Activated CD4-positive, alpha-beta memory T cell treated with anti-CD3 and anti-CD28 coated beads, Interleukin-2, amount 10 ng/mL, durations not matched to agents 7 days and 5 days (primary cell): ENCODE measurements at regions of chr12 and their contacts with region 1.

Region 1: DNA sequence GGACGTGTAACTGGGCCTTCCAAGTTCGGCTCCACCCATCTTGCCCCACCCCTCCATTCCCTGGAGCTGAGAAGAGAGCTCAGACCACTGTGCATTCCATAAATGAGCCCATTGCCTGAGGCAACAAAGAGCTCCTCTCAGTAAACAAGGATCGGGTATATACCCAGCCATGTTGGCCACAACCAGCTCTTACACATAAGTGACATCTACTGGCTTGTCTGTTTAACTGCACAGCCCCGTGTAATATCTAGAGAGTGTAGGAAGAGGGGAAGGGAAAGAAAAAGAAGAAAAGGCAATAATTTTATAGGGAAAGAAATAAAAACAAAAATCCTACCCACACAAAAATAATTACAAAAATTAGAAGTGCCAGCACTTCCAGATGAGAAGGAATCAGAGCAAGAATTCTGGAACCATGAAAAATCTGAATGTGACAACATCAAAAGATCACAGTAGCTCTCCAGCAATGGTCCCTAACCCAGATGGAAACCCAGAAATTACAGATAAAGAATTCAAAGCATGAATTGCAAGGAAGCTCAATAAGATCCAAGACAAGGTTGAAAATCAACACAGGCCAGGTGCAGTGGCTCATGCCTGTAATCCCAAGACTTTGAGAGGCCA is 308.1 kb downstream of the RPAP3 start:
- DNase-seq: peak; percentile 59
- H3K4me3 Mint-ChIP-seq: no peak overlapping the region
- H3K27ac Mint-ChIP-seq: peak overlapping the region; percentile 77
- H3K4me1 Mint-ChIP-seq: peaks cover 69% of the 10 kb centered on the region
- H3K27me3 Mint-ChIP-seq: no peaks in the 10 kb centered on the region

Region 2: DNA sequence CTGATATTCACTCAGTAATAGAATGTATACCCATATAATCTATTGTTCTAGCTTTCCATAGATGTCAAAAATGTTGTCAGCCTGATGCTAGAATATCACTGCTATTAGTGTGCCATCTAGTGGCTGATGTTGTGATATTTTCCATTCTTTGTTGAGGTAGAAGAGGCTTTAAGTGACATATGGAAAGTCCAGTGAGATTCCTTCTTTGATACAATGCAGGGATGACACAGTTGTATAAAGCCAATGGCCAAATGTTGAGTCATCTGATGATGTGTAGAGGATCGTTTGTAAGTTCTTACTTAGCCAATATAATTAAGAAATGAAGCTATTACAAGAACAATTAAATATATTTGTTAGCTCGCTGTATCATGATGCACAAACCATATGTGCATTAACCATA is 376.5 kb before region 1 on chr12:
- CTCF ChIA-PET with region 1: interaction called, 13 read pairs
- POLR2A ChIA-PET with region 1: no interaction called
- DNase-seq: no peak
- H3K4me3 Mint-ChIP-seq: no peak overlapping the region
- H3K27ac Mint-ChIP-seq: no peak overlapping the region
- H3K4me1 Mint-ChIP-seq: peaks cover 6% of the 10 kb centered on the region
- H3K27me3 Mint-ChIP-seq: peaks cover 18% of the 10 kb centered on the region

Region 3: GRCh38 chr12:47071241-47071852 is 326.4 kb before region 1 on chr12:
- CTCF ChIA-PET with region 1: interaction called, 26 read pairs
- POLR2A ChIA-PET with region 1: no interaction called
- DNase-seq: no peak
- H3K4me3 Mint-ChIP-seq: no peak overlapping the region
- H3K27ac Mint-ChIP-seq: no peak overlapping the region
- H3K4me1 Mint-ChIP-seq: peaks cover 3% of the 10 kb centered on the region
- H3K27me3 Mint-ChIP-seq: no peaks in the 10 kb centered on the region

Region 4: DNA sequence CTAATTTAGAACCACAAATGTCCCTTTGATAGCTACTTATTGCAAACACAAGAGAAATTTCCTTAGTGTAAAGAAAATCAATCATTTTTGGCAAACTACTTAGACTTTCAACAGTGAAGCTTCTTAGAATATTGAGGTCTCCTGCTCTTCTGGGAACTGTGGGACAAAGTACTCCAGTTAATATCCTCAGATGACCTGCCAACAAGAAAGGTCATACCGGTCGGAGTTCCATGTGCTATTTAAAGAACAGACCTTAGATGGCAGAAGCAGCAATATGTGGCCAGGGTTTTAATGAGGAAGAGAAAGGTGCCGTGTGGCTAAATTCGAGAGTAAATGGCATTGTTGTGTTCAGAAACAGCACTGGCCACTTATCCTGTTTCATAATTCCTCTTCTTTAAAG is 203.3 kb before region 1 on chr12:
- CTCF ChIA-PET with region 1: interaction called, 21 read pairs
- POLR2A ChIA-PET with region 1: interaction called, 6 read pairs
- DNase-seq: no peak
- H3K4me3 Mint-ChIP-seq: no peak overlapping the region
- H3K27ac Mint-ChIP-seq: peak overlapping the region; percentile 84
- H3K4me1 Mint-ChIP-seq: peaks cover 56% of the 10 kb centered on the region
- H3K27me3 Mint-ChIP-seq: no peaks in the 10 kb centered on the region

Region 5: DNA sequence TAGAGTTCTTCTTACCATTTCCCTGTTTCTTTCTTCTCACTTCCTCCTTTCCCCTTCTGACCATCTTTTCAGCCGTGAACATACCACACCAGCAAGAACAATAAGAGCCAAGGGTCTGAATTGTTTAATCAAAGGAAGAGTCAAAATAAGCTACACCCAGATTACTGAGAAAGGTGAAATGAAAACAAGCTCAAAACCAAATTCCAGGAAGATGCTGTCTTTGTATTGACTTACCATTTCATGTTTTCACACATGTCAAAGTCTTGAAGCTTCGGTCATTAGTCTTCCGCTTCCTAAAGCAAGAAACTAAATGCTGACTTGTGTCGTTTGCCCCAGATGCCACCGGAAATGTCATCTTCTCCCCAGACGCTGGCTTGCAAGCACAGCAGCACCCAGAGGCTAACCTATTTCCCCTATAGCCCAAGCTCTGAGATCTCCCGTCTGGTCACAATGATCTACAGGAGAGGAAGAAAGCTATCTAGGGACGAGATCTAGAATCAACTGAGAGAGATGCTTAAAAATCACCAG is 181.6 kb before region 1 on chr12:
- CTCF ChIA-PET with region 1: interaction called, 61 read pairs
- POLR2A ChIA-PET with region 1: interaction called, 159 read pairs
- DNase-seq: peak; percentile 87
- H3K4me3 Mint-ChIP-seq: peak overlapping the region; percentile 85
- H3K27ac Mint-ChIP-seq: peak overlapping the region; percentile 97
- H3K4me1 Mint-ChIP-seq: peaks cover 37% of the 10 kb centered on the region
- H3K27me3 Mint-ChIP-seq: no peaks in the 10 kb centered on the region

Region 6: DNA sequence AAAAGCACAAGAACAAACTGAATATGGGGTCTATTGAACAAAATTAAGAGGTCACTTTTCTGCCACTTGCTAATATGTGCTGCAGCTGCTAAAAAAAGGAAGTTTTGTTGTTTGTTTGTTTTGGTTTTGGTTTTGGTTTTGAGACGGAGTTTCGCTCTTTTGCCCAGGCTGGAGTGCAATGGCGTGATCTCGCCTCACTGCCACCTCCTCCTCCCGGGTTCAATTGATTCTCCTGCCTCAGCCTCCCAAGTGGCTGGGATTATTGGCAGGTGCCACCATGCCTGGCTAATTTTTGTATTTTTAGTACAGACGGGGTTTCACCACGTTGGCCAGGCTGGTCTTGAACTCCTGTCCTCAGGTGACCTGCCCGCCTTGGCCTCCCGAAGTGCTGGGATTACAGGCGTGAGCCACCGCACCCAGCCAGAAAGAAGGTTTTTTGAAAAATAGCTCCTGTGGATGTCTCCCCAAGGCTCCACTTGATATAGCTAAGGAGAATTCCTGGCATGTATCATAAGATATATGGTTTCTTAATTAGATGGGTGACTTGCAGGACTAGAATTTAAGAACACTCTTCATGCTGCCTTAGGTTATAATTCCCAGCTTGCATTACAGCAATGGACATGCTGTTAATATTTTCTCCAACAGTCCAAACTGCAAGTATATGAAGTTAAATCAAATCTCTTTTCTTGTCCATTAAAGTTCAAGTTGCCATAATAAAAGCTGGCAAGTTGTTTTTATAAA is 80.4 kb before region 1 on chr12:
- CTCF ChIA-PET with region 1: interaction called, 10 read pairs
- POLR2A ChIA-PET with region 1: interaction called, 3 read pairs
- DNase-seq: no peak
- H3K4me3 Mint-ChIP-seq: peak overlapping the region; percentile 33
- H3K27ac Mint-ChIP-seq: peak overlapping the region; percentile 48
- H3K4me1 Mint-ChIP-seq: peaks cover 31% of the 10 kb centered on the region
- H3K27me3 Mint-ChIP-seq: no peaks in the 10 kb centered on the region

Region 7: GRCh38 chr12:47408171-47408871 is 10.5 kb after region 1 on chr12:
- CTCF ChIA-PET with region 1: interaction called, 14 read pairs
- POLR2A ChIA-PET with region 1: interaction called, 4 read pairs
- DNase-seq: peak; percentile 61
- H3K4me3 Mint-ChIP-seq: no peak overlapping the region
- H3K27ac Mint-ChIP-seq: no peak overlapping the region
- H3K4me1 Mint-ChIP-seq: peaks cover 28% of the 10 kb centered on the region
- H3K27me3 Mint-ChIP-seq: no peaks in the 10 kb centered on the region